PC-9 (cell line): ENCODE measurements at regions of chr1 and their contacts with region 1.

Region 1: DNA sequence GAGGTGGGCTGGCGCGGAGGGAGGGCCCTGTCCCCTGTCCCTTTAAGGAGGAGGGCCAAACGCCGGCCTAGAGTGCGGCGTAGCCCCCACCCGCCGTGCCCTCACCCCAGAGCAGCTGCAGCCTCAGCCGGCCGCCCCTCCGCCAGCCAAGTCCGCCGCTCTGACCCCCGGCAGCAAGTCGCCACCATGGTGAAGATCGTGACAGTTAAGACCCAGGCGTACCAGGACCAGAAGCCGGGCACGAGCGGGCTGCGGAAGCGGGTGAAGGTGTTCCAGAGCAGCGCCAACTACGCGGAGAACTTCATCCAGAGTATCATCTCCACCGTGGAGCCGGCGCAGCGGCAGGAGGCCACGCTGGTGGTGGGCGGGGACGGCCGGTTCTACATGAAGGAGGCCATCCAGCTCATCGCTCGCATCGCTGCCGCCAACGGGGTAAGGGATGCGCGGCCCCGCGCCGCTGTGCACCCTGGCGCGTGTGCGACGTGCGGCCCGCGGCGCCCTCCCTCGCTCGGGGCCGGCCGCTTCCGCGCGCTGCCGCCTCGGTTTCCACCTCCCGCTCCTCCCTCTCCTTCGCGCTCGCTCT is at the start of gene PGM1:
- DNase-seq: peak; percentile 65 to 84
- H3K4me3 ChIP-seq: peak within 1 kb of the TSS; percentile 76
- H3K27ac ChIP-seq: peak within 1 kb of the TSS; percentile 75
- H3K4me1 ChIP-seq: peaks cover 27% of the 10 kb centered on the region
- H3K27me3 ChIP-seq: no peaks in the 10 kb centered on the region
- CTCF ChIP-seq: no peak
- total RNA-seq, gene PGM1: 90.1 and 101 TPM in 2 replicates

Region 2: DNA sequence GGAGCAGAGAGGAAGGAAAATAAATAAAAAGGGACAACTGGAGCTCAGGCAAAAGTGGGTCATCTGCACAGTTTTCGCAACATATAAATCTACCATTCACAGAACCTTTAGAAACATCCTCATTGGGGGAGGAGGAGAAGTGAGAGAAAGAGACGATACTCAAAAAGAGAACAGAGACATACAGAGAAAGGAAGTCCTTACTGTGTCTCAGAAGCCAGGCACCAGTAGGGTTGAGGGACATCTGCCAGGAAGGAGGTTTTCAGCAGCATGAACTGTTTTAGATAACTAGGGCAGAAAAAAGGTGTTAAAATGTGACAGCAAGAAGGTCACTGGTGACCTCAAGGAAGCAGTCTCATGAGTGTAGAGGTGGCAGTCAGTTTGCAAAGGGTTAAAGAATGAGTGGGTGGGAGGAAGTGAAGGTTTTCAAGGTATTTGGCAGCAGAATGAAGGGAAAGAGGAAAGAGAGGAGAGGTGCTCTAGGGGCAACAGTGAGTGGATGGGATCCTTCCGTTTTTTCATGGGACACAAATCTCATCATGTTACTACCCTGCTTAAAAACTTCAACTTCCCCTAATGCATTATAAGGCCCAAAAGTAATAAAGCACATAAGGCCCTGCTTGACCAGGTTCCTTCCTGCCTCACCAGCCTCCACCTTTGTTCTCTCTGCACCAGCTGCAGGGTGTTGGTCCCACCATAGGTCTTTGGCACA is 1363.5 kb after region 1 on chr1:
- CTCF ChIA-PET with region 1: no interaction called
- POLR2A ChIA-PET with region 1: interaction called, 10 read pairs
- intact Hi-C with region 1: no loop called
- DNase-seq: no peak
- H3K4me3 ChIP-seq: no peak overlapping the region
- H3K27ac ChIP-seq: 0 out of 2 replicates have a peak overlapping the region, but pooled peaks have one; percentile 13
- H3K4me1 ChIP-seq: peaks cover 24% of the 10 kb centered on the region
- H3K27me3 ChIP-seq: no peaks in the 10 kb centered on the region
- CTCF ChIP-seq: no peak